H1 (cell line): ENCODE measurements at regions of chr6 and their contacts with region 1.

Region 1: DNA sequence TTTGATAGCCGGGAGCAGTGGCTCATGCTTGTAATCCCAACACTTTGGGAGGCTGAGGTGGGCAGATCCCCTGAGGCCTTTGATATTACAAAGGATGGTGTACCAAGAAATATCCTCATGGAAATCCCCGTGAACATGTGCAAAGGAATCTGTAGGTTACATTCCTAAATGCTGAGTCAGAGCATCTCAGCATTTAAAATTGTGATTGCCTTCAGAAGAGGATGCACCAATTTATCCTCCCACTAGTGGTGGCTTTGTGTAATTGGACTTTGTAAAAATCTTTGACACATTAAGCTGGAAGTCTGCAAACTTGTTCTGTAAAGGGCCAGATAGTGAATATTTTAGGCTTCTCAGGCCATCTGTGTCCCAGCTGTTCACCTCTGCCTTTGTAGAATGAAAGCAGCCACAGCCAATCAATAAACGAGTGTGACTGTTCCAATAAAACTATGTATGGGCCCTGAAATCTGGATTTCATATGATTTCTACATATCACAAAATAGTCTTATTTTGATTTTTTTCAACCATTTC is 11.8 kb downstream of the TMEM14B start:
- DNase-seq: no peak
- H3K4me3 ChIP-seq: no peak overlapping the region
- H3K27ac ChIP-seq: no peak overlapping the region
- H3K4me1 ChIP-seq: no peaks in the 10 kb centered on the region; a peak in 1 of 7 replicates
- H3K27me3 ChIP-seq: no peaks in the 10 kb centered on the region
- CTCF ChIP-seq: peak in 2 of 3 experiments; percentile 2 to 62; a peak in 2 of 4 replicates
- EP300 ChIP-seq: no peak
- POLR2A ChIP-seq: no peak
- RAD21 ChIP-seq: peak; percentile 35 to 38

Region 2: DNA sequence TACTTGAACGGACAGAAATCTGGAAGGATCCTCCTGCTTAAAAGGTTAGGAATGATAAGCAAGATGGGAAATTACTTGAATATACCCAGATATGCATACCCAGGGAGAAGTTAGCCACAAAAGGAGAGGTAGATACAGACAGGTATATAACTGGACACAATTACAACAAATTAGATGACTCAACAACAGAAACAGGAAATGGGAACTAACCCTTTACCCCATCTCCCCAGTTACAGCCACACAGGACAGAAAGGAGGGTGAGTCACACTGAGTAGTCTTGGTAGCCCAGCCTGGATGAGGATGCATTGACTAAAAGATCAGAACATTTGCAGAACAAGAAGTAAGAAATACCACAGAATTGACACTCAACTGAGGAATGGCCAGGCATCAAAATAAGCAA is 126.2 kb before region 1 on chr6:
- CTCF ChIA-PET with region 1: no interaction called
- POLR2A ChIA-PET with region 1: no interaction called
- DNase-seq: no peak
- H3K4me3 ChIP-seq: no peak overlapping the region
- H3K27ac ChIP-seq: no peak overlapping the region
- H3K4me1 ChIP-seq: no peaks in the 10 kb centered on the region
- H3K27me3 ChIP-seq: no peaks in the 10 kb centered on the region
- CTCF ChIP-seq: no peak
- EP300 ChIP-seq: no peak
- POLR2A ChIP-seq: no peak
- RAD21 ChIP-seq: no peak

Region 3: DNA sequence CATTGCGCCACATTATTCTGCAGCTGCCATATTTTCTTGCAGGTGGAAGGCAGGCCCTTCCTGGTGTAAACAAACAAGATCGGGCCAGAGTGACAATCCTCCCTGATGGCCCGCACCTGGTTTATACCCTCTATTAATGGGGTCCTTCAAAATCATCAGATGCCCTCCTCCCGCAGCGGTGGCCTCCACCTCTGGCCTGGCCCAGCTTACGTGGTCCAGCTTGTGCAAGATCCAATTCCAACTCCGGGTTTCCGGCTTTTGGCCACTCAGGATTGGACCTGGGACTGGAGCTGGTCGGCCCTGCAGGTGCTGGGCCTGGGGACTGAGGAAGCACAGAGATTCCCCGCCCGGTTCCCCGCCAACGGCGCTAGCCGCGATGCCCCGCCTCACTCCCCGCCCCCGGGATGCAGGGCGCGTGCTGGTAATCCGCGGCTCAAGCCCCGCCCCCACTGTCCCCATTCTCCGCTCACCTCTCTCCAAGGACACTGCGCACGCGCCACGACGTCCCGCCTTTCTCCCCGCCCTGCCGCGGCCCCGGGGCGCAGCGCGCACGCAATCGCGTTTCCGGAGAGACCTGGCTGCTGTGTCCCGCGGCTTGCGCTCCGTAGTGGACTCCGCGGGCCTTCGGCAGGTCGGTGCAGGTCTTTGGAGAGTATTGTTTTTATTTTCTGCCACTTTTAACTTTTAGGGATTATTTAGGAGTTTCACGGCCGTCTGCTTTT is 12.0 kb before region 1 on chr6 and contains the start of gene TMEM14B:
- CTCF ChIA-PET with region 1: interaction called, 32 read pairs
- POLR2A ChIA-PET with region 1: interaction called, 32 read pairs
- DNase-seq: peak; percentile 95 to 100
- H3K4me3 ChIP-seq: peak within 1 kb of the TSS; percentile 54 to 91 (median 84)
- H3K27ac ChIP-seq: peak within 1 kb of the TSS; percentile 21; the same call in 1 of the 2 replicates
- H3K4me1 ChIP-seq: peaks cover 0 to 8% (median 1%) of the 10 kb centered on the region in 4 experiments; a peak in 2 of 7 replicates
- H3K27me3 ChIP-seq: no peaks in the 10 kb centered on the region; a peak in 1 of 7 replicates
- CTCF ChIP-seq: no peak
- EP300 ChIP-seq: no peak
- POLR2A ChIP-seq: peak; percentile 67 to 87
- RAD21 ChIP-seq: no peak; a peak in 1 of 4 replicates
- total RNA-seq, gene TMEM14B: 83.8 and 84.6 TPM in 2 replicates

Region 4: GRCh38 chr6:10771371-10771894 is 12.1 kb after region 1 on chr6:
- CTCF ChIA-PET with region 1: interaction called, 29 read pairs
- POLR2A ChIA-PET with region 1: interaction called, 5 read pairs
- DNase-seq: no peak
- H3K4me3 ChIP-seq: no peak overlapping the region
- H3K27ac ChIP-seq: no peak overlapping the region
- H3K4me1 ChIP-seq: no peaks in the 10 kb centered on the region
- H3K27me3 ChIP-seq: no peaks in the 10 kb centered on the region
- CTCF ChIP-seq: no peak
- EP300 ChIP-seq: no peak
- POLR2A ChIP-seq: no peak
- RAD21 ChIP-seq: no peak

Region 5: GRCh38 chr6:10793695-10794094 is 34.3 kb after region 1 on chr6:
- CTCF ChIA-PET with region 1: interaction called, 12 read pairs
- POLR2A ChIA-PET with region 1: interaction called, 3 read pairs
- DNase-seq: no peak
- H3K4me3 ChIP-seq: no peak overlapping the region
- H3K27ac ChIP-seq: no peak overlapping the region
- H3K4me1 ChIP-seq: no peaks in the 10 kb centered on the region
- H3K27me3 ChIP-seq: no peaks in the 10 kb centered on the region
- CTCF ChIP-seq: no peak
- EP300 ChIP-seq: no peak
- POLR2A ChIP-seq: no peak
- RAD21 ChIP-seq: no peak